Left lung (tissue), 14 donors: ENCODE measurements at regions of chr9 and their contacts with region 1.

Region 1: GRCh38 chr9:89597711-89598625 is 6.8 kb upstream of the GADD45G start:
- DNase-seq: peak in 2 of 4 donors; percentile 62 to 78
- ATAC-seq: peak; percentile 76
- H3K4me3 ChIP-seq: no peak overlapping the region
- H3K27ac ChIP-seq: no peak overlapping the region
- H3K4me1 ChIP-seq: peaks cover 0 to 2% of the 10 kb centered on the region in 2 donors
- H3K27me3 ChIP-seq: no peaks in the 10 kb centered on the region
- CTCF ChIP-seq: peak; percentile 77 to 79

Region 2: GRCh38 chr9:90107040-90107725 is 509.2 kb after region 1 on chr9:
- intact Hi-C with region 1: loop called in 1 of 2 experiments (anchors 5 kb)
- DNase-seq: peak in 3 of 4 donors; percentile 29 to 60 (median 56)
- ATAC-seq: peak; percentile 80
- H3K4me3 ChIP-seq: no peak overlapping the region
- H3K27ac ChIP-seq: peak overlapping the region; percentile 36 to 46
- H3K4me1 ChIP-seq: peaks cover 10 to 26% of the 10 kb centered on the region in 2 donors
- H3K27me3 ChIP-seq: no peaks in the 10 kb centered on the region
- CTCF ChIP-seq: no peak